Aorta (tissue), 5 donors: ENCODE measurements at regions of chr14 and their contacts with region 1.

Region 1: GRCh38 chr14:64764641-64765520 is 60.7 kb downstream of the PLEKHG3 start:
- DNase-seq: peak; percentile 83 to 91
- ATAC-seq: peak; percentile 90
- H3K4me3 ChIP-seq: no peak overlapping the region
- H3K27ac ChIP-seq: no peak overlapping the region
- H3K4me1 ChIP-seq: no peaks in the 10 kb centered on the region
- H3K27me3 ChIP-seq: no peaks in the 10 kb centered on the region

Region 2: GRCh38 chr14:64726585-64726890 is 38.3 kb before region 1 on chr14:
- intact Hi-C with region 1: loop called in 1 of 2 experiments (anchors 5 kb)
- DNase-seq: peak in 1 of 2 donors; percentile 73
- ATAC-seq: no peak
- H3K4me3 ChIP-seq: no peak overlapping the region
- H3K27ac ChIP-seq: no peak overlapping the region
- H3K4me1 ChIP-seq: no peaks in the 10 kb centered on the region
- H3K27me3 ChIP-seq: no peaks in the 10 kb centered on the region

Region 3: DNA sequence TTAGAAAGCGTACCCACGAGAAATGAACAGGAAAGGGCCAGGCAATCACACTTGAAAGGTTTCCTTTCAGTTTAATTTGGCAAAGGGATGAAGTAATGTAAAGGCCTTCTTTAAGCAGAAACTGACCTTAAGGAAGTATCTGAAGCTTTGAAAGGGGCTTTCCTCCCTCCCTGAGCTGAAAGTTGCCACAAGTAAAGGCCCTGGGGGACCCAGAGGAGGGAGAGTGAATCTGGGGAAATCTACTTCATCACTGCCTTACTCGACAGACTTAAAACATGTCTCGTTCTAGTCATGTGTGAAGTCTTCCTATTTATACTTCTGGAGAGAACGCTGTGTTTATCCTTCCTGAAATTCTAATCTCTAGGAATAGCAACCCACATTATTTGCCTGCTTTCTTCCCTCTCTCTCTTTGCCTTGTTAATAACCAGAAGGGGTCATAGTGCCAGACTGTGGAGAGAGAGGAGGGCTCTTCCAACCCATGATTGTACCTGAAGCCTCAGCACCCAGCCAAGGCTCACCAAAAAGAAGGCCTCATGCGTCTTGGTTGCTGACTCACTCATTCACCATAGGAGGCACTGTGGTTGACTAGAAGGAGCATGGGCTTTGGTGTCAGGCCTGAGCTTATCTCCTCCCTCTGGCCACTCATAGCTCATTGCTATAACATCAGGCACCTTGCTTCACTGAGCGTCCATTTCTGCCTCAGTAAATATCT is 187.9 kb after region 1 on chr14:
- intact Hi-C with region 1: no loop called
- DNase-seq: no peak
- ATAC-seq: no peak
- H3K4me3 ChIP-seq: no peak overlapping the region
- H3K27ac ChIP-seq: no peak overlapping the region
- H3K4me1 ChIP-seq: peaks cover 0 to 5% of the 10 kb centered on the region in 2 donors
- H3K27me3 ChIP-seq: no peaks in the 10 kb centered on the region